ENCODE measurements at regions of chr2 and their contacts with region 1.

Region 1: DNA sequence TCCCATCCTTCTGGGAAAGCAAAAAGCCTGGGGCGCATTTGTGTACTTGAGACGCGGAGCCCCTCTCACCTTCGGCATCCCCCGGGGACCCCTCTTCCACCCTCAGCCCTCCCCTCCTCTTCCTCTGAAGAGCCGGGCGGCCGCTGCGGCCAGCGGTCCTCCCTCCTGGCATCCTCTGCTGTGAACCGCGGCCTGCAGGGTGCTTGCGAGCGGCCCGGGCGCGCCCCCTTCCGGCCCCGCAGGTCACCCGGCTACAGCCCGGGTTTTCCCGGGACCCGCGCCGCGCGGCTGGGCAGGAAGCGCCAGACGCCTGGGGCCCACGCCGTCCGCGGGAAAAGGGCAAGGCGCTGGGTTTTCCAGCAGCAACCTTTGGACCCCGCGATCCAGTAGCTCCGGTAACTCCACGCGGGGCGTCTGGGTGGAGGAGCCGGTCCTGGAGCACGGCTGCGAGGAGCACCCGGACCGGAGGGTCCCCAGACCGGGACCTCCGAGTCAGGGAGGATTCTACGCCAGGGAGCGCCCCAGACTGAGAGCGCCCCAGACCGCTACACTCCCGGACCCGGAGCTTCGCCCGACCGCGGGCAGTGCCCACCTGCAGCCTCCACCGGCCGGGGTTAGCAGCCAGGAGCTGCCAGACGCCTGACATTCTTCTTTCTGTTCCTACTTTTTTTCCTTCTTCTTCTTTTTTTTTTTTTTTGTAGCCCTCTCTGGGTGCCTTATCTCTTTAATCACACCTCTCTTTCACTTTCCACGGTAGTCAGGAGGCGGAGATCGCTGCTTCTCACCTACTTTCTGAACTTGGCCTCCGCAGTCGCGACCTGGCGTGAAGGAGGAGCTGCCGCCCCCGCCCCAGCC is at the start of gene IL18R1:
- DNase-seq: peak; percentile 87 to 94 (median 93)
- ATAC-seq: peak; percentile 99
- H3K4me3 ChIP-seq: peak within 1 kb of the TSS; percentile 74
- H3K27ac ChIP-seq: peak within 1 kb of the TSS; percentile 42
- H3K4me1 ChIP-seq: no peaks in the 10 kb centered on the region
- H3K27me3 ChIP-seq: no peaks in the 10 kb centered on the region
- total RNA-seq, gene IL18R1: 2.7 to 8.1 (median 4.0) TPM

Region 2: DNA sequence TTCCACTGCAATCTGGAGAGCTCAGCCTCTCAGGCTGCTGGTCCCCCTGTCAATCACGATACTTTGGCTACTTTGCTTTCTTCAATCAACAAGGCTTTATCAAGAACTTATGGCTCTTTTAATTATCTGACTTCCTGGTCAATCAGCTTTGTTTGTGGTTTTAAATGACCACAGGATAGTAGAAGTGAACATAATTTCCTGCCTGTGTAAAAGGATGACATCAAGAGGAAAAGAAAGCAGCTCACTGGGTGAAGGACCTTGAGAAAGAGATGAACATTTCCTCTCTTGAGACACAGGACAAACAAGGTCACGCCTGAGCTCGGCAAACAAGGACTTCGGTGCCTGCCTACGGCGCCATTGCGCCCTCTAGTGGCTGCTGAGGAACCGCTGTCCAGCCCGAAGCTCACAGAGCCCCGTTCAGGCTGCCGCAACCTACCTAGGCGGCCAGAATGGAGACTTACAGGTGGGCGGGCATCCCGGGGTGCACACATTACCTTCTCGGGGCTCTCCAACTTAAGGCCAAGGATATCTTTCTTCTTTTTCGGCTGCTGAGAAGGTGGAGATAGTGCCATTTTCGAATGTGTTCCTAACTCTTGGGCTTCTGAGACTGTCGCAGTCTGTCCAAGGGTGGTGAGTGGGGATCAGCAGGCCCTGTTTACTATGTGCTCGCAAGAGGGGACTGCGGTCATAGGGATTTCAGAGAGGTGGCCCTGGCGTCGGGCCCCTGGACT is 114.9 kb before region 1 on chr2:
- intact Hi-C with region 1: loop called in 1 of 4 experiments (anchors 5 kb)
- DNase-seq: peak; percentile 94 to 96 (median 96)
- ATAC-seq: peak; percentile 94
- H3K4me3 ChIP-seq: no peak overlapping the region
- H3K27ac ChIP-seq: peak overlapping the region; percentile 63
- H3K4me1 ChIP-seq: no peaks in the 10 kb centered on the region
- H3K27me3 ChIP-seq: no peaks in the 10 kb centered on the region

Region 3: GRCh38 chr2:102251042-102251848 is 104.5 kb before region 1 on chr2:
- intact Hi-C with region 1: loop called in 2 of 4 experiments (anchors 5 to 10 kb)
- DNase-seq: peak; percentile 69 to 84 (median 79)
- ATAC-seq: peak; percentile 84 to 90
- H3K4me3 ChIP-seq: peak overlapping the region; percentile 41
- H3K27ac ChIP-seq: peak overlapping the region; percentile 28
- H3K4me1 ChIP-seq: no peaks in the 10 kb centered on the region
- H3K27me3 ChIP-seq: no peaks in the 10 kb centered on the region

Region 4: DNA sequence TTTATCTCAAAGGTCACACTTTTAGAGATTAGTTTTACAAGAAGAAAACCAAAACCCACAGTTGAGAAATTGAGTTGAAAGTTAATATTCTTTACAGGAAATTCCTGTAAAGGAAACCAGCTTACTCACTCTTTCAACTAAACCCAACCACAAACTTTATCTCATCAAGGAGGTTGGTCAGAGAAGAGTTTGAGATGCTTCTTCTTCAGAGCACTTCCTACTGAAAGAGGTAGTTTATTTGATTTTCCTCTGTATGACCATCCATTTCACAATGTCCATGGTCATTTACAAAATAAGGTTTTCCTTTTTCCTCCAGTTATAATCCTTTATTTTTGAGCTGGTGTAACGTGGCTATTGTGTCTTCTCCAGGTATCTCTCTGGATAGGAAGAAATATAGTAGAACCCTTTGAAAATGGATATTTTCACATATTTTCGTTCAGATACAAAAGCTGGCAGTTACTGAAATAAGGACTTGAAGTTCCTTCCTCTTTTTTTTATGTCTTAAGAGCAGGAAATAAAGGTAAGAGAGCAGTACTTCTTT is 62.7 kb after region 1 on chr2:
- intact Hi-C with region 1: no loop called
- DNase-seq: no peak
- ATAC-seq: no peak
- H3K4me3 ChIP-seq: no peak overlapping the region
- H3K27ac ChIP-seq: no peak overlapping the region
- H3K4me1 ChIP-seq: no peaks in the 10 kb centered on the region
- H3K27me3 ChIP-seq: no peaks in the 10 kb centered on the region

Measured in right cardiac atrium (tissue), 5 donors.